ENCODE measurements at regions of chr7 and their contacts with region 1.

Region 1: DNA sequence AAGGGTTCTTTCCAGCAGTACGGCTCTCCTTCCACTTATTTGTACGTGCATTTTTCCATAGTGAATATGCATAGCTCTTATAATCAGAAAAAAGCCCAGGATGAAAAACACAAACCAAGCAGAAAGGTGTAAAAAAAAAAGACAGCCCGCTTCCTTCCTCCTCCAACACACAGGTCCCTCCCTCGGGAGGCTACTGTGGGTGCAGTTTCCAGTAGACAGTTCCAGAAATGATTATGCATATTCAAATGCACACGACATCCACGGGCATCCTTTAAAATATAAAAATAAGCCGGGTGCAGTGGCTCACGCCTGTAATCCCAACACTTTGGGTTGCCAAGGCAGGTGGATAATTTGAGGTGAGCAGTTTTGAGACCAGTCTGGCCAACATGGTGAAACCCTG is 59.9 kb downstream of the TNRC18 start:
- DNase-seq: no peak
- ATAC-seq: no peak
- H3K4me3 ChIP-seq: no peak overlapping the region
- H3K27ac ChIP-seq: no peak overlapping the region
- H3K4me1 ChIP-seq: peaks cover 7% of the 10 kb centered on the region
- H3K27me3 ChIP-seq: no peaks in the 10 kb centered on the region
- CTCF ChIP-seq: no peak

Region 2: GRCh38 chr7:5218564-5219360 is 145.0 kb before region 1 on chr7:
- CTCF ChIA-PET with region 1: no interaction called
- POLR2A ChIA-PET with region 1: no interaction called
- in situ Hi-C with region 1: no loop called
- intact Hi-C with region 1: no loop called
- DNase-seq: no peak
- ATAC-seq: no peak
- H3K4me3 ChIP-seq: no peak overlapping the region
- H3K27ac ChIP-seq: no peak overlapping the region
- H3K4me1 ChIP-seq: peaks cover 3% of the 10 kb centered on the region; the same call in 1 of the 2 replicates
- H3K27me3 ChIP-seq: no peaks in the 10 kb centered on the region
- CTCF ChIP-seq: no peak

Region 3: GRCh38 chr7:5322621-5323410 is 40.9 kb before region 1 on chr7:
- CTCF ChIA-PET with region 1: no interaction called
- POLR2A ChIA-PET with region 1: no interaction called
- in situ Hi-C with region 1: no loop called
- intact Hi-C with region 1: no loop called
- DNase-seq: no peak
- ATAC-seq: peak; percentile 40
- H3K4me3 ChIP-seq: no peak overlapping the region
- H3K27ac ChIP-seq: no peak overlapping the region
- H3K4me1 ChIP-seq: no peaks in the 10 kb centered on the region
- H3K27me3 ChIP-seq: no peaks in the 10 kb centered on the region
- CTCF ChIP-seq: no peak

Region 4: GRCh38 chr7:5477723-5478531 is 114.2 kb after region 1 on chr7:
- CTCF ChIA-PET with region 1: interaction called, 12 read pairs
- POLR2A ChIA-PET with region 1: no interaction called
- in situ Hi-C with region 1: no loop called
- intact Hi-C with region 1: no loop called
- DNase-seq: no peak
- ATAC-seq: peak; percentile 51
- H3K4me3 ChIP-seq: no peak overlapping the region
- H3K27ac ChIP-seq: no peak overlapping the region
- H3K4me1 ChIP-seq: no peaks in the 10 kb centered on the region
- H3K27me3 ChIP-seq: no peaks in the 10 kb centered on the region
- CTCF ChIP-seq: no peak; the same call in 1 of the 2 replicates

Region 5: GRCh38 chr7:5629941-5630340 is 266.2 kb after region 1 on chr7:
- CTCF ChIA-PET with region 1: no interaction called
- POLR2A ChIA-PET with region 1: no interaction called
- in situ Hi-C with region 1: no loop called
- intact Hi-C with region 1: no loop called
- DNase-seq: no peak
- ATAC-seq: peak; percentile 74
- H3K4me3 ChIP-seq: no peak overlapping the region
- H3K27ac ChIP-seq: no peak overlapping the region
- H3K4me1 ChIP-seq: no peaks in the 10 kb centered on the region
- H3K27me3 ChIP-seq: no peaks in the 10 kb centered on the region
- CTCF ChIP-seq: no peak

Measured in Panc1 (cell line).